ENCODE measurements at regions of chr12 and their contacts with region 1.

Region 1: DNA sequence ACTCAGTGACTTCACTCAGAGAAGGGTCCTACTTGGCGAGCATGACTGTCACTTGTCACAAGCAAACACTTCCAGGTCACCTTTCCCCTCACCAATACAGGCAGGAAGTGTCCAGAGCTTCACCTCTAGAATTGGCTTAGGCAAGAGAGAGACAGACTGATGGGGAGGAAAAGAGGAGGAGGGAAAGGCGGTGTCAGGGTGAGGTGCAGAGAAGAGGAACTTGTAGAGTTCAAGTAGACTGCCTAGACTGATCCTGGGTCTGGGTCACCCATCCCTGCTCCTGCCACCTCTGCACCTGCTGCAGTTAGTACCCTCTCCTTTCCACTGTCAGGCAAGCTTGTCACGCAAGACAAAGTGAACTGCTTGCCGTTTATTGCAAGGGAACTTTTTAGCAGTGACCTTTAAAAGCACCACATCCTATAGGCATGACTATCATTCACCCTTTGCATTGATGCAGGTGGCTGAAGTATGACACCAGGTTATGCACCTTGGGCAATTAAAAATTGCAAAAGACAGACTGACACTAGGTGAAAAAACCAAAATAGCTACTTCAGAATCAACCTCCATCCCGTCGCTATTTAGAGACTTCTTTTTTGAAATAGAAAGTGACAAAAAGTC is 292.4 kb downstream of the SYT1 start:
- DNase-seq: no peak
- ATAC-seq: no peak
- H3K4me3 ChIP-seq: no peak overlapping the region
- H3K27ac ChIP-seq: no peak overlapping the region
- H3K4me1 ChIP-seq: peaks cover 2% of the 10 kb centered on the region; the same call in 1 of the 2 replicates
- H3K27me3 ChIP-seq: no peaks in the 10 kb centered on the region
- CTCF ChIP-seq: no peak
- POLR2A ChIP-seq: no peak
- RAD21 ChIP-seq: no peak

Region 2: DNA sequence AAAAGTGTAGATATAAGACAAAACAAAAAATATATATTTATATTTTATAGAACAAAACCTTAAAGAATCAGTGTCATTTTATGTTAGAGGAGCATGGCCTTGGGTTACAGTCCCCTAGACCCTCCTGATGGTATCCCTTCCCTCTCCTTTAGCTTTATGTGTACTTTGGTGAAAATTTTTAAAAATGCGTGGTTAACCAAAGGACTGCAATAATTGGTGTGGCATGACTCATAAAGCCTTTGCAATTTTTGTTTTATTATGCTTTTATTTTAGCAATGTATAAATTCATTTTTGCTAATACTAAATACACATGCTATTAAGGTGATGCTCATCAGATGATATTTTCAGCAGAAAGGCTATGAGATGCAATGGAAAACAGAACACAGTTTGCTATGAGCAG is 28.0 kb before region 1 on chr12:
- CTCF ChIA-PET with region 1: no interaction called
- POLR2A ChIA-PET with region 1: interaction called, 12 read pairs
- dilution Hi-C with region 1: no loop called
- in situ Hi-C with region 1: no loop called
- intact Hi-C with region 1: no loop called
- DNase-seq: peak; percentile 28
- ATAC-seq: no peak
- H3K4me3 ChIP-seq: no peak overlapping the region
- H3K27ac ChIP-seq: no peak overlapping the region
- H3K4me1 ChIP-seq: no peaks in the 10 kb centered on the region; the same call in 1 of the 2 replicates
- H3K27me3 ChIP-seq: no peaks in the 10 kb centered on the region
- CTCF ChIP-seq: no peak
- POLR2A ChIP-seq: no peak
- RAD21 ChIP-seq: no peak

Region 3: DNA sequence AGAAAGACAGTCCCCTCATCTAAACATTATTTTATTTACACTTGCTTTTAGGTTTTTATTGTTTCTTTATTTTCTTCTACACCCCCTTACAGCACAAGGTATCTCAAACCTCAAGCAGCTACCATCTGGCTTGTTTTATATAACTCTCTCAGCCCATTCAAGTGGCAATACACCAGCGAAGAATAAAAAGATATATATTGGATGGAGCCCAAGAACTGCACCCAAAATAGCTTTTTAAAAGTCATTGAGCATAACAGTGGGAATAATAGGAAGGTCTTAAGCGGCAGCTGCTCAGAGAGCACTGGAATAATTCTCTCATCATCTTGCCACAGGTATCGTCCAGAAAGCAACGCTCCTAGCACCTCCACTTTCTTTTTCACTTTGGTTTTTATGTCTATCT is 30.1 kb after region 1 on chr12:
- CTCF ChIA-PET with region 1: no interaction called
- POLR2A ChIA-PET with region 1: no interaction called
- dilution Hi-C with region 1: no loop called
- in situ Hi-C with region 1: no loop called
- intact Hi-C with region 1: no loop called
- DNase-seq: no peak
- ATAC-seq: no peak
- H3K4me3 ChIP-seq: no peak overlapping the region
- H3K27ac ChIP-seq: no peak overlapping the region
- H3K4me1 ChIP-seq: peaks cover 2% of the 10 kb centered on the region; the same call in 1 of the 2 replicates
- H3K27me3 ChIP-seq: no peaks in the 10 kb centered on the region
- CTCF ChIP-seq: no peak
- POLR2A ChIP-seq: no peak
- RAD21 ChIP-seq: no peak

Measured in IMR-90 (cell line).